ENCODE measurements at regions of chr14 and their contacts with region 1.

Region 1: DNA sequence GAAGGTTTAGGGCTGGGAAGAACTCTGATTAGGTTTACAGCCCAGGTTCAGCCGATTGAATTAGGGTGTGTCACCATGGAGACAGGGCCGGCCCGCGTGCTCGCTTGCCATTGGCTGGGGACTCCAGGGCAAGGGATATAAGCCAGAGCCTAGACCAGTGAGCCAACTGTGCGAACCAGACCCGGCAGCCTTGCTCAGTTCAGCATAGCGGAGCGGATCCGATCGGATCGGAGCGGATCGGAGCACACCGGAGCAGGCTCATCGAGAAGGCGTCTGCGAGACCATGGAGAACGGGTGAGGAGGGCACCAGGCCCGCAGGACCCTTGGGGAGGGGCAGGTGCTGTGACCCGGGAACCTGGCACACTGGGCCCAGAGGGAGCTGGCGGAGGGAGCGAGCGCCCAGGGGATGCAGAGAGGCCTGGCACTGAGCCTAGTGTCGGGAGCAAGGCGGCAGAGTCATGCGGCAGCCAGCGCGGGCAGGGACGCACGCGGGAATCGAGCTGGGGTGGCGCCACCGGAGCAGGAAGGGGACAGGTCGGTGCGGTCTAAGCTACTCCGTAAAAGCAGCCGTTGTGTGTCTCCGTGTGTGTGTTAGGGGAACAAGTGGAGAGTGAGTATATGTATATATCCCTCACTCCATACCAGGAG is at the start of gene PNP:
- DNase-seq: peak; percentile 92 to 99
- ATAC-seq: peak; percentile 94 to 98
- H3K4me3 ChIP-seq: peak within 1 kb of the TSS; percentile 72
- H3K27ac ChIP-seq: peak within 1 kb of the TSS; percentile 80 to 95
- H3K4me1 ChIP-seq: peaks cover 27% of the 10 kb centered on the region
- CTCF ChIP-seq: no peak
- EP300 ChIP-seq: no peak
- POLR2A ChIP-seq: peak; percentile 100
- RAD21 ChIP-seq: no peak; a peak in 1 of 5 replicates
- polyA plus RNA-seq, gene PNP: 111 and 129 TPM in 2 replicates

Region 2: GRCh38 chr14:20434701-20435581 is 34.4 kb before region 1 on chr14:
- CTCF ChIA-PET with region 1: no interaction called
- POLR2A ChIA-PET with region 1: no interaction called
- DNase-seq: no peak
- ATAC-seq: no peak
- H3K4me3 ChIP-seq: no peak overlapping the region
- H3K27ac ChIP-seq: no peak overlapping the region
- H3K4me1 ChIP-seq: no peaks in the 10 kb centered on the region
- CTCF ChIP-seq: no peak
- EP300 ChIP-seq: no peak
- POLR2A ChIP-seq: no peak
- RAD21 ChIP-seq: no peak

Region 3: GRCh38 chr14:20454516-20455354 is 14.6 kb before region 1 on chr14 and contains the starts of genes APEX1 and OSGEP:
- CTCF ChIA-PET with region 1: interaction called, 3 read pairs
- POLR2A ChIA-PET with region 1: interaction called, 38 read pairs
- DNase-seq: peak; percentile 98 to 100
- ATAC-seq: peak; percentile 89 to 91
- H3K4me3 ChIP-seq: peak within 1 kb of the TSS; percentile 73
- H3K27ac ChIP-seq: peak within 1 kb of the TSS; percentile 85 to 96
- H3K4me1 ChIP-seq: peaks cover 24% of the 10 kb centered on the region
- CTCF ChIP-seq: no peak
- EP300 ChIP-seq: no peak
- POLR2A ChIP-seq: peak; percentile 75
- RAD21 ChIP-seq: no peak
- polyA plus RNA-seq, gene APEX1: 324 and 419 TPM in 2 replicates
- polyA plus RNA-seq, gene OSGEP: 32.8 and 33.2 TPM in 2 replicates

Region 4: DNA sequence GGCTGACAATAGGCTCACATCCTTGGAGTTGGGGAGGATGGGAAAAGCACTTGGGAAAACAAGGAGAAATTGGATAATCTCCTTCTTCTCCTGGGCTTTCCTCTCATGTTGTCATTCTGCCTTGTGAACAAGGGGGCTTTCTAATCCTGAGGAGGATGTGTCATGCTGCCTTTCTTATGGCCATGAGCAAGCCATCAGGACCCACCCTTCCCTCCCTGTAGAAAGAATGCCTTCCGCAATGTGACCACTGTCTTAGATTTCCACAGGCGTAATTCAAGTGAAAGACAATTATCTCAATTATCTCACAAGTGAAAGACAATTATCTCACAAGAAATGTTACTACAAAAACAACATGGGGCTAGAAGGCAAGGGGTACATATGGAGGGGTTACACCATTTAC is 175.2 kb after region 1 on chr14:
- CTCF ChIA-PET with region 1: no interaction called
- POLR2A ChIA-PET with region 1: no interaction called
- DNase-seq: no peak
- ATAC-seq: no peak
- H3K4me3 ChIP-seq: no peak overlapping the region
- H3K27ac ChIP-seq: no peak overlapping the region
- H3K4me1 ChIP-seq: no peaks in the 10 kb centered on the region
- CTCF ChIP-seq: no peak
- EP300 ChIP-seq: no peak
- POLR2A ChIP-seq: no peak
- RAD21 ChIP-seq: no peak

Measured in A549 (cell line).